Dendritic cell treated with granulocyte-macrophage colony-stimulating factor and Interleukin-4, amounts not matched to agents 40 ng/mL and 50 ng/mL, for 4 days (primary cell): ENCODE measurements at regions of chr11 and their contacts with region 1.

Region 1: DNA sequence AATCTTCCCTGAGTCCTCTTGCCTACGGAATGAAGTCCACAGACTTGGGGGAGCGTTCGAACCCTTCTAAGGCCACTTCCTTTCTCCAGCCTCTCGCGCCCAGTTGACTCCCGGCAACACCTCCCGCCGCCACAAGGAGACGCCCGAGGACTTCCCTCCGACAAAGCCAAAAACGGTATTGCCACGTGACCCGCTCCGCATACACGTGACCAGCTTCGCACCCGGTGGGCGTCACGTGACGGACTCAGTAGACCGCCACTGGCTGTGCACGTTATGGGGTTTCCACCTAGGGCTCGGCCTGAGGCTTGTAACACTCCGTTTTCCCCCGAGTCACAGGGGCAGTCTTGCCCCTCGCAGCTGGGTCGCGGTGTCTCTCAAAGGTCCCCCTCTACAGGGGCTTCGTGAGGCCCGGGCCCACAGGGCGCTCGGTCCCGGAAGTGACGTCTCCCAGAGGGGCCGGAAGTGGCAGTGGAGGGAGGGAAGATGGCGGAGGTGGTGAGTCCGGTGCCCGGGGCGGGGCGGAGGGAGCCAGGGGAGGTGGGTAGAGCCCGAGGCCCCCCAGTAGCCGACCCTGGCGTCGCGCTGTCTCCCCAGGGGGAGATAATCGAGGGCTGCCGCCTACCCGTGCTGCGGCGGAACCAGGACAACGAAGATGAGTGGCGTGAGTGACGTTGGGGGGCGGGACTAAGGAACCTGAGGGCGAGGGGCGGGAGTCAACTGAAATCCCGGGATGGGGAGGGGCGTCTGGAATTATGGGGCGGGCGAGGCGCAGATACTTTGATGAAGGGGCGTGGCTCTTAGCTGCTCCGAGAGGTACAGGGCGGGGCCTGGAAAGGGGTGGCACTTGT is at the start of gene KAT5:
- H3K4me3 Mint-ChIP-seq: peak within 1 kb of the TSS; percentile 87
- H3K27ac Mint-ChIP-seq: peak within 1 kb of the TSS; percentile 99
- H3K4me1 Mint-ChIP-seq: peaks cover 52% of the 10 kb centered on the region
- H3K27me3 Mint-ChIP-seq: no peaks in the 10 kb centered on the region

Region 2: GRCh38 chr11:65625628-65626342 is 86.2 kb before region 1 on chr11:
- intact Hi-C with region 1: loop called (anchors 2 kb)
- H3K4me3 Mint-ChIP-seq: no peak overlapping the region
- H3K27ac Mint-ChIP-seq: peak overlapping the region; percentile 62
- H3K4me1 Mint-ChIP-seq: peaks cover 19% of the 10 kb centered on the region
- H3K27me3 Mint-ChIP-seq: no peaks in the 10 kb centered on the region

Region 3: GRCh38 chr11:65779851-65780577 is 68.0 kb after region 1 on chr11:
- intact Hi-C with region 1: loop called (anchors 5 kb)
- H3K4me3 Mint-ChIP-seq: peak overlapping the region; percentile 98
- H3K27ac Mint-ChIP-seq: peak overlapping the region; percentile 96
- H3K4me1 Mint-ChIP-seq: peaks cover 52% of the 10 kb centered on the region
- H3K27me3 Mint-ChIP-seq: peaks cover 35% of the 10 kb centered on the region

Region 4: DNA sequence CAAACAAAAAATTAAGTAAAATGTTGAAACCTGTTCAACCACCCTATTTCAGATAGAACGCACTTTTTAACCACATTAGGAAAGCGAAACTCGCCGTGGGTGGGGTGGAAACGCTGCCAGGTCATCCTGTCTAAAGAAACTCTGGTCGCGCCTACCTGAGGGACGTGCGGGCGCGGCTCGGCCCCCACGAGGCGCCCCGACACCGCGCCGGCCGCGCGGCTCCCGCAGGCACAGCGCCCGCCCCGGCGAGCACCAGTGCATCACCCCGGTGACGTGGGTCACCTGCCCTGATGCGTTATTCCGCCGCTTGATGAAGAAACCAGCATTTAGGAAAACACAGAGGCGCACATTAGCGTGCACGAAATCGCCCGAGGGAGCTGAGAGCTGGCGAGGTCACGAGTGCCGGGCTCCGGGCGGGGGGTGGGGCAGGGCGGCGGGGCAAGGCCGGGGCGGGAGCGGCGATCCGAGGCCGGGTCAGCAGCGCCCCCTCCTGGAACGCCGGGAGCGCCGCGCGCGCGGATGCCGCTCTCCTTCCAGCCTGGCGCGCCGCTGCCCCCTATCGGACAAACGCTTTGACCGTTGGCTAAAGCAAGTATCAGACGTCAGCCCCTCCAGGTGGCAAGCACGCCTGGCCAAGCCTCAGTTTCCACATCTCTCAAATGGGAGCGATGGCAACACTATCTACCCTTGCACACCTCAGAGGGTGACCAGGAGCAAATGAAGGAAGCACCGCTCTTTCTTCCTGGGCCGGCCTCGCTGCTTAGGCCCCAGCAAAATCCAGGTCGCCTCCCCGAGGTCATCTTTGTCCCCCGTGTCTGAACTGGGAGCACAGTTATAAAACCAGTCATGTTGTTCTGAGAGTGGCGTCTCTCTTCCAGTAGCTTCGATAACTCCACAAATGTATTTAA is 106.1 kb after region 1 on chr11:
- intact Hi-C with region 1: loop called (anchors 1 kb)
- H3K4me3 Mint-ChIP-seq: peak overlapping the region; percentile 78
- H3K27ac Mint-ChIP-seq: peak overlapping the region; percentile 77
- H3K4me1 Mint-ChIP-seq: peaks cover 47% of the 10 kb centered on the region
- H3K27me3 Mint-ChIP-seq: peaks cover 7% of the 10 kb centered on the region

Region 5: DNA sequence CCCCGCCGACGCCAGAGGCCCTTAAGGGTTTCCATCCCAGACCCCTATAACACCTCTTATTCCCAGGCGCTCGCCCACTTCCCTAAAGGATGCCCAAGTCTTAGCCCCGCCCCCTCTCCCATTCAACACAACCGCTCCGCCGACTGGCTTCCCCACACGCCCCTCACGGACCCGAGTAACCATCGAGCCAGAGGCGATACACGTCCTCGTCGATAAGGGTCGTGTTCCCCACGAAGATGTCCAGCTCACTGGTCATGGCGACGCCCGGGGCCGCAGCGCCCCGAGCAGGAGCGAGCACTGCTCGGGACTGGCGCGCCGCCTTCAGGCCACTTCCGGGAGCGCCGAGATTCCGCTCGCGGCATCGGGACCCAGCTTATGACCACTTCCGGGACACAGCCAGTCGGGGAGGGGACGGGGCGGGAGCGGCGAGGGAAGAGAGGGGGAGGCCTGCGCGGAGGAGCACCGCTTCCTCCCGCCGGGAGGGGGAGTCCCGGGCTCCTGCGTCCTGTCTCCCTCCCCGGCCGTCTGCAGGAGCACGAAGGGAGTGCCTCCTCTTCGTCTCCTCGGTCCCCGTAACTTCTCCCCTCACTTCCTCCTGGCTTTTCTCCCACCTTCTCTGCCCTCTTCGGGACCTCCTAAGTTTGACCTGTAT is 176.3 kb after region 1 on chr11 and contains the start of gene FIBP:
- intact Hi-C with region 1: loop called (anchors 2 kb)
- H3K4me3 Mint-ChIP-seq: peak within 1 kb of the TSS; percentile 98
- H3K27ac Mint-ChIP-seq: peak within 1 kb of the TSS; percentile 99
- H3K4me1 Mint-ChIP-seq: peaks cover 77% of the 10 kb centered on the region
- H3K27me3 Mint-ChIP-seq: no peaks in the 10 kb centered on the region